CD8-positive, alpha-beta memory T cell (primary cell): ENCODE measurements at regions of chr4 and their contacts with region 1.

Region 1: GRCh38 chr4:173370477-173371291 is at the start of gene SAP30:
- DNase-seq: peak; percentile 91 to 98 (median 94)
- H3K4me3 ChIP-seq: peak within 1 kb of the TSS; percentile 96
- H3K4me3 Mint-ChIP-seq: peak within 1 kb of the TSS; percentile 85 to 100 (median 99)
- H3K27ac ChIP-seq: peak within 1 kb of the TSS; percentile 89
- H3K27ac Mint-ChIP-seq: peak within 1 kb of the TSS; percentile 78 to 99 (median 96)
- H3K4me1 ChIP-seq: peaks cover 12% of the 10 kb centered on the region
- H3K4me1 Mint-ChIP-seq: peaks cover 26 to 55% (median 47%) of the 10 kb centered on the region in 3 donors
- H3K27me3 ChIP-seq: no peaks in the 10 kb centered on the region
- H3K27me3 Mint-ChIP-seq: peaks cover 0 to 2% of the 10 kb centered on the region in 2 donors
- total RNA-seq, gene SAP30: 24.8 to 25.3 TPM

Region 2: DNA sequence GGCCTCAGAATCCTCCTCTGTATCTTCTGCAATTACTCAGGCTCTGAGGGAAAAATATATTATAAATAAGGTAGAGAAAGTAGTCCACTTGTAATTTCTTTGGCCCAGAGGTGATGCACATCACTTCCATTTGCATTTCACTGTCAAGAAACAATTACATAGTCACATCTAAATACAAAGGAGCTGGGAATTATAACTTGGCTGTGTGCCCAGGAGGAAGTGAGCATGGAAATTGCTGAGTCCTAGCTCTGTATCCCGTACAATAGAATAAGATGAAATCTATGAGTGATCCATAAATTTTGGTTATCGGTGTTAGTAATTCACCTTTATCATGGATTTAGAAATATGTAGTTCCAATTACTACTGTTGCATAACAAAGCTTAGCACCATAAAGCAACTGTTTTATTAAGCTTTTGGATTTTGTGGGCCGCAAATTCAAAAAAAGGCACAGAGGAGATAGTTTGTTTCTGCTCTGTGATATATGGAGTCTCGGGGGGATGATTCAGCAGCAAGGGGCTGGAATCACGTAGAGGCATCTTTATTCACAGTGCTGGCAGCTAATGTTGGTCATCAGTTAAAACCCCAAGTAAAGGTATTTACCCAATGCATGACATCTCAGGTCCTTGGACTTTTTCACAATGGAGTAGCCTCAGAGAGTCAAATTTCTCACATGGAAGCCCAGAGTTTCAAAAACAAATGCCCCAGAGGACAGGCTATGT is 443.4 kb before region 1 on chr4:
- CTCF ChIA-PET with region 1: no interaction called
- POLR2A ChIA-PET with region 1: no interaction called
- DNase-seq: no peak
- H3K4me3 ChIP-seq: no peak overlapping the region
- H3K4me3 Mint-ChIP-seq: no peak overlapping the region
- H3K27ac ChIP-seq: no peak overlapping the region
- H3K27ac Mint-ChIP-seq: no peak overlapping the region
- H3K4me1 ChIP-seq: no peaks in the 10 kb centered on the region
- H3K4me1 Mint-ChIP-seq: no peaks in the 10 kb centered on the region
- H3K27me3 ChIP-seq: no peaks in the 10 kb centered on the region
- H3K27me3 Mint-ChIP-seq: peaks cover 0 to 13% of the 10 kb centered on the region in 2 donors

Region 3: GRCh38 chr4:173318648-173319211 is 52.0 kb before region 1 on chr4:
- CTCF ChIA-PET with region 1: interaction called, 10 read pairs
- POLR2A ChIA-PET with region 1: no interaction called
- DNase-seq: peak in 2 of 5 donors; percentile 10 to 19
- H3K4me3 ChIP-seq: no peak overlapping the region
- H3K4me3 Mint-ChIP-seq: no peak overlapping the region
- H3K27ac ChIP-seq: no peak overlapping the region
- H3K27ac Mint-ChIP-seq: peak overlapping the region in 1 of 8 donors; percentile 32
- H3K4me1 ChIP-seq: no peaks in the 10 kb centered on the region
- H3K4me1 Mint-ChIP-seq: peaks cover 0 to 3% (median 2%) of the 10 kb centered on the region in 3 donors
- H3K27me3 ChIP-seq: no peaks in the 10 kb centered on the region
- H3K27me3 Mint-ChIP-seq: no peaks in the 10 kb centered on the region

Region 4: GRCh38 chr4:173334085-173334772 is 36.5 kb before region 1 on chr4 and contains the start of gene HMGB2:
- CTCF ChIA-PET with region 1: interaction called, 39 read pairs
- POLR2A ChIA-PET with region 1: interaction called, 206 read pairs
- DNase-seq: peak; percentile 99 to 100 (median 99)
- H3K4me3 ChIP-seq: peak within 1 kb of the TSS; percentile 94
- H3K4me3 Mint-ChIP-seq: peak within 1 kb of the TSS; percentile 95 to 100 (median 98)
- H3K27ac ChIP-seq: peak within 1 kb of the TSS; percentile 98
- H3K27ac Mint-ChIP-seq: peak within 1 kb of the TSS; percentile 88 to 99 (median 96)
- H3K4me1 ChIP-seq: peaks cover 22% of the 10 kb centered on the region
- H3K4me1 Mint-ChIP-seq: peaks cover 27 to 42% (median 39%) of the 10 kb centered on the region in 3 donors
- H3K27me3 ChIP-seq: no peaks in the 10 kb centered on the region
- H3K27me3 Mint-ChIP-seq: peaks cover 0 to 4% of the 10 kb centered on the region in 2 donors
- total RNA-seq, gene HMGB2: 341 to 342 TPM

Region 5: GRCh38 chr4:173380987-173381386 is 10.3 kb after region 1 on chr4:
- CTCF ChIA-PET with region 1: no interaction called
- POLR2A ChIA-PET with region 1: interaction called, 11 read pairs
- DNase-seq: no peak
- H3K4me3 ChIP-seq: no peak overlapping the region
- H3K4me3 Mint-ChIP-seq: no peak overlapping the region
- H3K27ac ChIP-seq: no peak overlapping the region
- H3K27ac Mint-ChIP-seq: peak overlapping the region in 2 of 8 donors; percentile 24 to 51
- H3K4me1 ChIP-seq: no peaks in the 10 kb centered on the region
- H3K4me1 Mint-ChIP-seq: peaks cover 0 to 2% (median 1%) of the 10 kb centered on the region in 3 donors
- H3K27me3 ChIP-seq: no peaks in the 10 kb centered on the region
- H3K27me3 Mint-ChIP-seq: no peaks in the 10 kb centered on the region

Region 6: DNA sequence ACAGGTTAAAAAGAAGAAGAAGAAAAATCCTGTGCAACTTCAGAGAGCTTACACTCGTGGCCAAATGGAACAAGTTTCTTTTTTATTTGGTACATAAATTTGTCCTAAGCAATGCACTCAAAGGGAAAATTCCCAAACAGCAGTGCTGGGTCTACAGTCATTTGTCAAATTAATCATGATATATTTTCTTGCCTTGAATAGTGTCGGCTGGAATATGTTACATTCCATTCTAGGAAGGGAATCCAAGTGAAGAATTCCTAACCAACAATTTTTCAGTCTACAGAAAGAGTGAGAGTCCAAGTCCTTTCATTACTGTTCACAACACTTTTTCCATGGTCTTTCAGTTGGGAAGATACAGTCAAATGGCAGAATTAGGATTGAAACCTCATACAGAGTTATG is 95.4 kb after region 1 on chr4:
- CTCF ChIA-PET with region 1: no interaction called
- POLR2A ChIA-PET with region 1: no interaction called
- DNase-seq: no peak
- H3K4me3 ChIP-seq: no peak overlapping the region
- H3K4me3 Mint-ChIP-seq: no peak overlapping the region
- H3K27ac ChIP-seq: no peak overlapping the region
- H3K27ac Mint-ChIP-seq: peak overlapping the region in 1 of 8 donors; percentile 33
- H3K4me1 ChIP-seq: no peaks in the 10 kb centered on the region
- H3K4me1 Mint-ChIP-seq: no peaks in the 10 kb centered on the region
- H3K27me3 ChIP-seq: no peaks in the 10 kb centered on the region
- H3K27me3 Mint-ChIP-seq: peaks cover 3 to 5% of the 10 kb centered on the region in 2 donors

Region 7: DNA sequence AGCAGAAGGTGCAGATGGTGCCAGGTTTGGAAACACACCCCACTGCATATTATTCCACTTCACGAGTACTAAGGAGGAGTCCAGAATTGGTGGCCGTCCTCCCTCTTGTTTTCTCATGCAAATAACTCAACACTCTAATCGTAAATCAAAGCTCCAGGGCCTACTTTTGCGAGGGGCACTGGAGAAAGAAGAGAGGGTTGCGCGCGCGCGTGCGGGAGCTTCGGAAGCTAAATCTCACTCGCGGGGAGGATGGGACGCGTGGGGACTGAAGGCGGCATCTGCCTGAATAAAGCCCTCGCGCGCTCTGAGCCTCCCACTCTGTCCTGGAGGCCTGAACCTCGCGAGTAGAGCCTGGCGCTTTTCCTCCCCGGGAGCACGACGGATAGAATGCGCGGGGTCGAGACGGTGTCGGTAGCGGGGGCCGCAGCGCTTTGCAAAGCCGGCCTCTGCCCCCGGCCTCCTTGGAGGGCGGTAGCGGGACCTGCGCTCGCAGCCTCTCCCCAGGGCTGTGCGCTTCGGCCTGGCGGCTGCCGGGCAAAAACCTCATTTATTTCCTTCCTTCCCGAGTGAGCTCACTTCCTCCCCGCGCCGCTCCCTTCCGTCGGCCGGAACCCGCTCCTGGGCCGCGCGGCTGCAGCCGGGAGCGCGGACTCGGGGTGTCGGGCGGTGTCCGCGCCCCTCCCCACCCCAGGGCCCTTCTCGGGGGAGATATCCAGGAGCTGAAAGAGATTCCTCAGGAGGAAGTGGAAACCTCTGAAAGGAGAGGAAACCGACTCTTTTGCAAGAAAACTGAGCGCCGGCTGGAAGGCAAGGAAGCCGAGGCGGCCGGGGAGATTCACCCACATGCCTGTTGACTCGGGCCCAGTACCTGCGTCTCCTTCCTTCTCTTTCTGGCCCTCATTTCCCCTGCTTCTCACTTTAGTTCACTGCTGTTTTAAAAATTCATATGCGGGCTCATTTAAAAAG is 138.6 kb after region 1 on chr4:
- CTCF ChIA-PET with region 1: no interaction called
- POLR2A ChIA-PET with region 1: no interaction called
- DNase-seq: no peak
- H3K4me3 ChIP-seq: peak overlapping the region; percentile 20
- H3K4me3 Mint-ChIP-seq: peak overlapping the region; percentile 71 to 81 (median 77)
- H3K27ac ChIP-seq: no peak overlapping the region
- H3K27ac Mint-ChIP-seq: peak overlapping the region in 1 of 8 donors; percentile 74
- H3K4me1 ChIP-seq: peaks cover 22% of the 10 kb centered on the region
- H3K4me1 Mint-ChIP-seq: peaks cover 19 to 41% (median 40%) of the 10 kb centered on the region in 3 donors
- H3K27me3 ChIP-seq: peaks cover 32% of the 10 kb centered on the region
- H3K27me3 Mint-ChIP-seq: peaks cover 70 to 96% of the 10 kb centered on the region in 2 donors

Region 8: DNA sequence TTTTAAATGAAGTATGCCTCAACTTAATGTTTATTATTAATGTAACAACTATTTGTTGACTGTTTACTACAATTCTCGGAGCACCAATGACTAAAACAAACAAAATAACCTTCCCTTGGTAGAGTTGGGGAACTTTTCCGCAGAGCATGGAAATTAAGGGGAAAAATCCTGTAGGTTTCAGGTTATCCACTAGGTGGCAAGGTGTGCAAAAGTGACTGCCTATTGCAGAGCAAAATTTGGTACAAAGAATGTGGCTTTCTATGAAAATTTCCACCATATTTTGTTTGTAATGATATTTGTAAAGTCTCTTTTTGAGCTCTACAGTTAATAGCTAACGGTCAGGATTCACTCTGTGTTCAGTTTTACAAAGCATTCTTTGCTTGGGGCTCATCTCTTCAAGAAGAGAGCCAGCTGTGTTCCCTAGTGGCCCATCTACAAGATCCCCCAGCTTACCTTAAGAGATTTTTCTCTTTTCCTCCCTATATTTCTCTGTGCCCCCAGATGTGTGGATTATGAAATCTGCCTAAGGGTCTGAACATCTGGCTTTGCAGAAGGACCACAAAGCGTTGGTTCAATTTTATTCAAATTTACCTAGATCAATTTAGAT is 851.7 kb after region 1 on chr4:
- CTCF ChIA-PET with region 1: no interaction called
- POLR2A ChIA-PET with region 1: interaction called, 15 read pairs
- DNase-seq: peak in 1 of 5 donors; percentile 23
- H3K4me3 ChIP-seq: no peak overlapping the region
- H3K4me3 Mint-ChIP-seq: no peak overlapping the region
- H3K27ac ChIP-seq: no peak overlapping the region
- H3K27ac Mint-ChIP-seq: no peak overlapping the region
- H3K4me1 ChIP-seq: peaks cover 9% of the 10 kb centered on the region
- H3K4me1 Mint-ChIP-seq: peaks cover 9 to 14% (median 11%) of the 10 kb centered on the region in 3 donors
- H3K27me3 ChIP-seq: peaks cover 16% of the 10 kb centered on the region
- H3K27me3 Mint-ChIP-seq: peaks cover 28 to 57% of the 10 kb centered on the region in 2 donors